ENCODE measurements at regions of chr19 and their contacts with region 1.

Region 1: GRCh38 chr19:35154525-35155406 is at the start of gene FXYD5:
- DNase-seq: peak; percentile 75
- ATAC-seq: peak; percentile 69
- H3K4me3 Mint-ChIP-seq: peak within 1 kb of the TSS; percentile 98
- H3K27ac Mint-ChIP-seq: peak within 1 kb of the TSS; percentile 93
- H3K4me1 Mint-ChIP-seq: peaks cover 38% of the 10 kb centered on the region
- H3K27me3 Mint-ChIP-seq: peaks cover 9% of the 10 kb centered on the region
- total RNA-seq, gene FXYD5: 353 to 360 TPM

Region 2: DNA sequence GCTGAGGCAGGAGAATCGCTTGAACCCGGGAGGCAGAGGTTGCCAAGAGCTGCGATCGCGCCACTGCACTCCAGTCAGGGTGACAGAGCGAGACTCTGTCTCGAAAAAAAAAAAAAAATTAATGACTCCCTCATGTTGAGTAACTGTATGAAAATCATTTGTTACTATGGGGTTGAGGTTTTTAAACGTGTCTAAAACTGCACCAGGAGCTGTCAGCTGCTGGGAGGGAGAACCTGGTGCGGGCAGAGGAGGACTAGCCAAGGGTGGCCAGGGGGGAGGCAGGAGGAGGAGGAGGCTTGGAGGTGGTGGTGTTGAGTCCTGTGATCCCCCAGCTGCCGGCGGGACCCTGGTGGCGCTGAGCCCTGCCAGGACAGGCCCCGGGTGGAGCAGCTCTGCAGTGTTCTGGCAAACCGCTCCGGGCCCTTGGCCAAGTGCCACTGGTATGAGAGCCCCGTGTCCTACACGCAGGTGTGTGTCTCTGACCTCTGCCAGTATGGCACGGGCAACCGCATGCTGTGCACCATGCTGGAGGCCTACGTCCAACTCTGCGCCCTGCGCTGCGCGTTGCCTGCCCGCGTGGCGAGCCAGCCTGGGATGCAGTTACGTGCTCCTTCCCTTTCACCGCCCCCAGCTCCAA is 56.2 kb before region 1 on chr19:
- POLR2A ChIA-PET with region 1: no interaction called
- DNase-seq: no peak
- ATAC-seq: no peak
- H3K4me3 Mint-ChIP-seq: no peak overlapping the region
- H3K27ac Mint-ChIP-seq: no peak overlapping the region
- H3K4me1 Mint-ChIP-seq: no peaks in the 10 kb centered on the region
- H3K27me3 Mint-ChIP-seq: peaks cover 6% of the 10 kb centered on the region

Region 3: GRCh38 chr19:35130761-35131735 is 23.7 kb before region 1 on chr19:
- POLR2A ChIA-PET with region 1: no interaction called
- DNase-seq: no peak
- ATAC-seq: no peak
- H3K4me3 Mint-ChIP-seq: no peak overlapping the region
- H3K27ac Mint-ChIP-seq: no peak overlapping the region
- H3K4me1 Mint-ChIP-seq: peaks cover 4% of the 10 kb centered on the region
- H3K27me3 Mint-ChIP-seq: no peaks in the 10 kb centered on the region

Region 4: DNA sequence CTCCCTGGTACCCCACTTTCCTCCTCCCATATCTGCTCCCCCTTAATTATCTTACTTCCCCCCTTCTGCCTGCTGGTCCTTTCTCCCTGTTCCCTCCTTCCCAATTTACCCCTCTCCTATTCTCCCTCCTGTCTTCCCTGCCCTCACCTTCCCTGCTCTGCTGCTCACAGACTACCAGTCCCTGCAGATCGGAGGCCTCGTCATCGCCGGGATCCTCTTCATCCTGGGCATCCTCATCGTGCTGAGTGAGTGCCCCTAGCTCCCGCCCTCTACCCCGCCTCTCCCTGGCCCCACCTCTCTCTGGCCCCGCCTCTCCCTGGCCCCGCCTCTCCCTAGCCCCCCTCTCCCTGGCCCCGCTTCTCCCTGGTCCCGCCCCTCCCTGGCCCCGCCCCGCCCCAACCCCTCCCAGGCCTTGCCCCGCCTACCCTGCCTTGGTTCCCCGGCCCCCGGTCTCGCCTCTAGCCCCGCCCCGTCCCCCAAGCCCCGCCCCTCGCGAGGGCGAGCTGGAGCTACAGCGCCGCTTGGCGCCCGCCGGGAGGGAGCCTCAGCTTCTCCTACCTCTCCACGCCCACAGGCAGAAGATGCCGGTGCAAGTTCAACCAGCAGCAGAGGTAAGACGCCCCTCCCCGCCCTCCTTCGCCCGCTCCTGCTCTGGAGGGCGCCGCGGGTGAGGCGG is 13.7 kb before region 1 on chr19:
- POLR2A ChIA-PET with region 1: interaction called, 16 read pairs
- DNase-seq: peak; percentile 98
- ATAC-seq: peak; percentile 88
- H3K4me3 Mint-ChIP-seq: peak overlapping the region; percentile 86
- H3K27ac Mint-ChIP-seq: peak overlapping the region; percentile 78
- H3K4me1 Mint-ChIP-seq: peaks cover 18% of the 10 kb centered on the region
- H3K27me3 Mint-ChIP-seq: peaks cover 12% of the 10 kb centered on the region

Region 5: GRCh38 chr19:35168207-35168606 is 13.4 kb after region 1 on chr19:
- POLR2A ChIA-PET with region 1: interaction called, 19 read pairs
- DNase-seq: no peak
- ATAC-seq: no peak
- H3K4me3 Mint-ChIP-seq: no peak overlapping the region
- H3K27ac Mint-ChIP-seq: peak overlapping the region; percentile 57
- H3K4me1 Mint-ChIP-seq: peaks cover 36% of the 10 kb centered on the region
- H3K27me3 Mint-ChIP-seq: no peaks in the 10 kb centered on the region

Region 6: GRCh38 chr19:35204799-35205732 is 50.3 kb after region 1 on chr19:
- POLR2A ChIA-PET with region 1: interaction called, 40 read pairs
- DNase-seq: no peak
- ATAC-seq: peak; percentile 13
- H3K4me3 Mint-ChIP-seq: peak overlapping the region; percentile 81
- H3K27ac Mint-ChIP-seq: peak overlapping the region; percentile 97
- H3K4me1 Mint-ChIP-seq: peaks cover 66% of the 10 kb centered on the region
- H3K27me3 Mint-ChIP-seq: no peaks in the 10 kb centered on the region

Region 7: GRCh38 chr19:35213663-35214632 is 59.2 kb after region 1 on chr19:
- POLR2A ChIA-PET with region 1: interaction called, 40 read pairs
- DNase-seq: peak; percentile 49
- ATAC-seq: peak; percentile 28
- H3K4me3 Mint-ChIP-seq: peak overlapping the region; percentile 43
- H3K27ac Mint-ChIP-seq: peak overlapping the region; percentile 94
- H3K4me1 Mint-ChIP-seq: peaks cover 54% of the 10 kb centered on the region
- H3K27me3 Mint-ChIP-seq: no peaks in the 10 kb centered on the region

Measured in activated naive CD8-positive, alpha-beta T cell treated with anti-CD3 and anti-CD28 coated beads, Interleukin-2, amount 10 ng/mL, durations not matched to agents 7 days and 5 days (primary cell).